Naive thymus-derived CD8-positive, alpha-beta T cell (primary cell): ENCODE measurements at regions of chr13 and their contacts with region 1.

Region 1: GRCh38 chr13:50893211-50893852 is 16.3 kb upstream of the RNASEH2B start:
- DNase-seq: peak in 3 of 10 donors; percentile 59 to 63 (median 62)
- ATAC-seq: peak; percentile 89 to 95
- H3K4me3 Mint-ChIP-seq: peak overlapping the region; percentile 64 to 85 (median 78)
- H3K27ac Mint-ChIP-seq: peak overlapping the region; percentile 89 to 96 (median 94)
- H3K4me1 Mint-ChIP-seq: peaks cover 23 to 54% (median 43%) of the 10 kb centered on the region in 4 donors
- H3K27me3 Mint-ChIP-seq: no peaks in the 10 kb centered on the region

Region 2: DNA sequence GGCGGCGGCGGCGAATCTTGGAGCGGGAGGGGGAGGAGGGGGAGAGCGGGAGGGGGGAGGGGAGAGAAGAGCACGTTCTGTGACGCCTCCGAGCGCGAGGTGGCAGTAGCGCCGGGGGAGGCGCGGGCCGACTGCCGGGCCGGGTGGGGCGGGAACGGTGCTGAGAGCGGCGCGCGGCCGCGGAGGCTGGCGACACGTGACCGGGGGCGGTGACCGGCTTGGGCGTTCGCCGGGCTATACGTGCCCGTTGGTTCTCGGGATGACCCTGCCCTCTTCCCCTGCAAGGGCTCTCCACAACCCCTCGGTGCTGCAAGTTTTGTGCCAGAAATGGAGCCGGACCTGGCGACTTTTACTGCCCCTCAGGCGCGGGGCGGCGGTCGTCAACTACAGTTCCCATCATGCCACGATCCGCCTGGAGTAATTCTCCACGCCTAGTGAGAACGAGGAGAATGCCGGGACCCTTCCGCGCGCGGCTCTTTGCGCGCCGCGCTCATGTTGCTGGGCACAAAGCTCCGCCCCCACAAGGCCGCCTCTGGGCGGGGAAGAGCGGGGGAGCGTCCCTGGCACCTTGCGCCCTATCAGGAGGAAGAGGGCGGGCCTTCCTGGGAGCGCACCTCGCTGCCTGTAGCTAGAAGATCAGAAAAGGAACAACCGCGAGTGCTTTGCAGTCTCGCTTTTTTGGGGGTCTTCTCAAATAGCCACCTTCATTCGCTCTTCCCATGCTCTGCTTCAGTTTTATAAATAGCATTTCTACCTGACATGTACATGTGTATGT is 1100.6 kb before region 1 on chr13 and contains the start of gene KPNA3:
- POLR2A ChIA-PET with region 1: interaction called, 11 read pairs
- DNase-seq: peak; percentile 90 to 97 (median 94)
- ATAC-seq: peak; percentile 87 to 89
- H3K4me3 Mint-ChIP-seq: peak within 1 kb of the TSS; percentile 84 to 99 (median 98)
- H3K27ac Mint-ChIP-seq: peak within 1 kb of the TSS; percentile 89 to 100 (median 98)
- H3K4me1 Mint-ChIP-seq: peaks cover 17 to 39% (median 32%) of the 10 kb centered on the region in 4 donors
- H3K27me3 Mint-ChIP-seq: peaks cover 0 to 10% (median 3%) of the 10 kb centered on the region in 5 donors
- polyA plus RNA-seq, gene KPNA3: 20.2 to 23.9 (median 20.3) TPM

Region 3: DNA sequence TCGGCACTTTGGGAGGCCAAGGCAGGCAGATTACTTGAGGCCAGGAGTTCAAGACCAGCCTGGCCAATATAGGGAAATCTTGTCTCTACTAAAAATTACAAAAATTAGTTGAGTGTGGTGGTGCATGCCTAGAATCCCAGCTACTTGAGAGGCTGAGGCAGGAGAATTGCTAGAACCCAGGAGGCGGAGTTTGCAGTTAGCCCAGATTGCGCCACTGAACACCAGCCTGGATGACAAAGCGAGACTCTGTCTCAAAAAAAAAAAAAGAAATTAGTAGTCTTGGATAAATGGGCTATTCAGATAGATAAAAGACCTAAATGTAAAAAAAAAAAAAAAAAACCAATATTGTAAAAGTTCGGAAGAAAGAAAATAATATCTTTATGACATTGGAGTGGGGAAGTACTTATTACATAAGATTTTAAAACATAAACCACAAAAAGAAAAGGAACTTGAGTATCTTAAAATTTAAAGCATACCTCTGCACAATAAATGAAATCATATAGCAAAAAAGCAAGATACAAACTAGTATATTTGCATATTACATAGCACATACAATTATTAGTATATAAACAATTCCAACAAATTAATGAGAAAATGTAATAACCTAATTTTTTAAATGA is 10.4 kb before region 1 on chr13:
- POLR2A ChIA-PET with region 1: no interaction called
- DNase-seq: no peak
- ATAC-seq: no peak
- H3K4me3 Mint-ChIP-seq: no peak overlapping the region
- H3K27ac Mint-ChIP-seq: no peak overlapping the region
- H3K4me1 Mint-ChIP-seq: peaks cover 0 to 8% (median 3%) of the 10 kb centered on the region in 4 donors
- H3K27me3 Mint-ChIP-seq: peaks cover 0 to 10% (median 0%) of the 10 kb centered on the region in 5 donors

Region 4: DNA sequence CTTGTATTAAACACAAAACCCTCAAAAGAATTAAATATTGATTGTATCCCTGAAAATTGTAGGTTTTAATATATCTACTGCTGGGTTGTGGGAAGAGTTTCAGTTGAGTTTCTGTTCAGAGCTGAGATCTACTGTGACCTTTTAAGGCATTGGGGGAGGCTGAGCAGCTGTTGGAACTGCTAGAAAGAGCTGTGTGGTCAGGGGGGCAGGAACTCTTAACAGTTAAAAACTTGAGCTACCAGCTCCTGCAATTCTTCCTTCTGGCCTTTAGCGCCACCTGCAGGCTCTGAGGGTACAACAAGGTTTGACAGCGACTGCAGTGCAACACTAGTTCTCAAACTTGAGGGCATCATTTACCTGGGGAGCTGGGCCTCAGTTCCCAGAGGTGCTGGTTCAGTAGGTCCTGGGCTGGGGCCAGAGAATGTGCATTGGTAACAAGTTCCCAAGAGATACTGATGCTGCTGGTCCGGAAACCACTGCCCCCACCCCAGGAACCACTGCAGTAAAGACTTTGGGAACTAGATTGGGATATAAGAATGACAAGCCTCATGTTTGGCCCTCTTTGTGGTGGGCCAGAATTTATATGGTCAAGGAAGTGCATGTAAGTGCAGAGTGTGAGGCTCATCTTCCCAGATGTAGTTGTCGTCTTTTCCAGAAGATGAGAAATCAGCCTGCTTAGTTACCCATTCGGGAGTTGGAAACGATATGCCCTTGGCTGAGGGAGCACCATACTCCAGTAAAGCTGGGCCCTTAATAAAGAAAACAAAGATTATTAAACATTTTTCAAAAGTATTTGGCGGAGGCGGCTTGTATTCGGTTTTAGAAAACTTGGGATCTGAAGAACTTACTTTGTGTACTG is 18.8 kb after region 1 on chr13:
- POLR2A ChIA-PET with region 1: interaction called, 87 read pairs
- DNase-seq: peak; percentile 77 to 95 (median 88)
- ATAC-seq: peak; percentile 48 to 60
- H3K4me3 Mint-ChIP-seq: peak overlapping the region; percentile 80 to 97 (median 90)
- H3K27ac Mint-ChIP-seq: peak overlapping the region; percentile 91 to 99 (median 96)
- H3K4me1 Mint-ChIP-seq: peaks cover 29 to 69% (median 55%) of the 10 kb centered on the region in 4 donors
- H3K27me3 Mint-ChIP-seq: no peaks in the 10 kb centered on the region